Sciatic nerve (tissue), 2 donors: ENCODE measurements at regions of chr2 and their contacts with region 1.

Region 1: DNA sequence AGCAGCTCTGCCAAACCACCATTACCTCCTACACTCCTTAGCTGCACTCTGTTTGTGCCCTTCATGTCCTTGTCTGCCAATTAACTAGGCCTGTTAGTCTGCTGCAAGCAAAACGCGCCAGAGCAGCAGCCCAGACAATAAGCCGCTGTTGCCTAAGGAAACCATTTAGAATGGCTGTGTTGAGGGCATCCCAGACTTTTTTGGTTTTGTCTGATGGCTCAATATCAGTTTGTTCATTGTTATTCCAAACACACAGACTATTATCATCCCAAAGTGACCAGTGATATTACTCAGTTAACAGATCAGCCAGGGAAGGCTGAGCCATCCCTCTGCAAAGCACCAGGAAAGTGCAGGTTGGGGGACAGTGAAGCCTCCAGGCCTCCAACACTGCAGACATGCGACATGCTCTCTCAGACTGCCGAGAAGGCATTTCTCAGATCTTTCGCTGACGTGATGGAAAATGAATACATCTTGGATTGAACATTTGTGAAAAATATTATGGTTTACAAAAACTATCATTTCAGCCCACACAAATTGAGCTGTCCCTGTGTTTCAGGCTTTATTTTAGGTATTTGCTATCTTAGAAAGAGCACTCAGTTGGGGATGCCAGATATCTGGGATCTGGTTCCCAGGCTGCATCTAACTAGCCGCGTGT is 182.0 kb upstream of the HNRNPA3 start:
- DNase-seq: no peak
- ATAC-seq: peak; percentile 55

Region 2: GRCh38 chr2:176914371-176914770 is 116.2 kb before region 1 on chr2:
- intact Hi-C with region 1: no loop called
- DNase-seq: no peak
- ATAC-seq: no peak

Region 3: GRCh38 chr2:176976731-176977685 is 53.6 kb before region 1 on chr2:
- intact Hi-C with region 1: no loop called
- DNase-seq: no peak
- ATAC-seq: peak; percentile 44

Region 4: DNA sequence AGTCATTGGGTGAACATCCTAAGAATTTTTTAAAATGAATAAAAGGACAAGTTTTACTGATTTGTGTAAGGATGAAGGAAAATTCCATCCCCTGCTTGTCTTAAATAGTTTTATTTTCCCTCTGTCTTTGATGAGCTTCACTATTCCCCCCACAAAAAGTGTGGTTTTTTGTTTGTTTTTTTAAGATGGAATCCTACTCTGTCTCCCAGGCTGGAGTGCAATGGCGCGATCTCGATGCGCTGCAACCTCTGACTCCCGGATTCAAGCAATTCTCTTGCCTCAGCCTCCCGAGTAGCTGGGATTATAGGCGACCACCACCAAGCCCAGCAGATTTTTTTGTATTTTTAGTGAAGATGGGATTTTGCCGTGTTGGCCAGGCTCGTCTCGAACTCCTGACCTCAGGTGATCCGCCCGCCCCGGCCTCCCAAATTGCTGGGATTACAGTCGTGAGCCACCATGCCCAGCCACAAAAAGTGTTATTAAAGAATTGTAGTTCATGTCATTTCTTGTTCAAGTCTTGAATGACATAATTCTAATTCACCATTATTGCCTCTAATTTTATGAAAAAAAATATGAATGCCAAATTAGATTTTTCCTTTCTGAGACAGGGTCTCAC is 453.7 kb after region 1 on chr2:
- intact Hi-C with region 1: loop called (anchors 5 kb)
- DNase-seq: no peak
- ATAC-seq: no peak